A549 (cell line): ENCODE measurements at regions of chr1 and their contacts with region 1.

Region 1: DNA sequence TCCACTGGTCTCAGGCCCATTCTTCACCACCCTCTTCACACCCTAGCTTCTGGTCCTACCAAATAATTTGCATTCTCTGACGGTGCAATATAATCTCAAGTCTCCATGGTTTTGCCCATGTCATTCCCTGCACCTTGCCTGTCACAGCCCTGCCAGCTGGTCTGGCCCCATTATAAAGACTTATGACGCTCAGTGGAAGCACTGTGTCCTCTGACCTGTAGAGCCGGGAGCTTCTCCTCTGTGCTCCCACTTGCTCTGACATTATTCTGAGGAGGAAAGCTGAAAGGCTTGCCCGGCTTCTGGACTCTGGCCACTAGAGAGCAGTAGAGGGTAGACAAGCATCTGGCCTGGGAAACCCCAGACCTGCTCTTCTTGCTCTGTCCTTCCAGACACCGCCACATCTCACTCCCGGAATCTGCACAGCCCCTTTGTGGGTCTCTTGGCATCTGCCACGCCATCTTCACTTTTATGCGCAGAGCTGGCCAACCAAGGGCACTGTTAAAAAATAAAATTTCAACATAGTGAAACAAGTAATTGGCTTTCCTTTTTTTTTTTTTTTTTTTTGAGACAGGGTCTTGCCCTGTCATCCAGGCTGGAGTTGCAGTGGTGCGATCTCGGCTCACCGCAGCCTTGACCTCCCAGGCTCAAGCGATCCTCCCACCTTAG is 44.4 kb downstream of the NENF start:
- DNase-seq: peak; percentile 81 to 90
- ATAC-seq: peak; percentile 93 to 95
- H3K4me3 ChIP-seq: no peak overlapping the region
- H3K27ac ChIP-seq: peak overlapping the region; percentile 33 to 72; a peak in 5 of 6 replicates
- H3K4me1 ChIP-seq: peaks cover 21% of the 10 kb centered on the region
- CTCF ChIP-seq: peak; percentile 87
- EP300 ChIP-seq: no peak
- POLR2A ChIP-seq: no peak
- RAD21 ChIP-seq: peak; percentile 95

Region 2: GRCh38 chr1:212498283-212499040 is 21.3 kb after region 1 on chr1:
- CTCF ChIA-PET with region 1: interaction called, 18 read pairs
- POLR2A ChIA-PET with region 1: no interaction called
- DNase-seq: peak in 1 of 2 experiments; percentile 35
- ATAC-seq: peak in 1 of 2 experiments; percentile 32; a peak in 2 of 6 replicates
- H3K4me3 ChIP-seq: no peak overlapping the region
- H3K27ac ChIP-seq: peak overlapping the region in 1 of 2 experiments; percentile 33; a peak in 2 of 6 replicates
- H3K4me1 ChIP-seq: peaks cover 8% of the 10 kb centered on the region; the same call in 1 of the 3 replicates
- CTCF ChIP-seq: no peak
- EP300 ChIP-seq: no peak
- POLR2A ChIP-seq: no peak
- RAD21 ChIP-seq: no peak

Region 3: GRCh38 chr1:212529211-212529741 is 52.1 kb after region 1 on chr1:
- CTCF ChIA-PET with region 1: interaction called, 12 read pairs
- POLR2A ChIA-PET with region 1: no interaction called
- DNase-seq: no peak
- ATAC-seq: no peak
- H3K4me3 ChIP-seq: no peak overlapping the region
- H3K27ac ChIP-seq: no peak overlapping the region
- H3K4me1 ChIP-seq: no peaks in the 10 kb centered on the region
- CTCF ChIP-seq: no peak
- EP300 ChIP-seq: no peak
- POLR2A ChIP-seq: no peak
- RAD21 ChIP-seq: no peak

Region 4: GRCh38 chr1:212566522-212567479 is 89.7 kb after region 1 on chr1:
- CTCF ChIA-PET with region 1: interaction called, 18 read pairs
- POLR2A ChIA-PET with region 1: no interaction called
- DNase-seq: peak; percentile 66 to 72
- ATAC-seq: peak; percentile 80 to 89
- H3K4me3 ChIP-seq: peak overlapping the region; percentile 52
- H3K27ac ChIP-seq: peak overlapping the region; percentile 78 to 84
- H3K4me1 ChIP-seq: peaks cover 15% of the 10 kb centered on the region
- CTCF ChIP-seq: no peak
- EP300 ChIP-seq: no peak
- POLR2A ChIP-seq: no peak
- RAD21 ChIP-seq: no peak

Region 5: DNA sequence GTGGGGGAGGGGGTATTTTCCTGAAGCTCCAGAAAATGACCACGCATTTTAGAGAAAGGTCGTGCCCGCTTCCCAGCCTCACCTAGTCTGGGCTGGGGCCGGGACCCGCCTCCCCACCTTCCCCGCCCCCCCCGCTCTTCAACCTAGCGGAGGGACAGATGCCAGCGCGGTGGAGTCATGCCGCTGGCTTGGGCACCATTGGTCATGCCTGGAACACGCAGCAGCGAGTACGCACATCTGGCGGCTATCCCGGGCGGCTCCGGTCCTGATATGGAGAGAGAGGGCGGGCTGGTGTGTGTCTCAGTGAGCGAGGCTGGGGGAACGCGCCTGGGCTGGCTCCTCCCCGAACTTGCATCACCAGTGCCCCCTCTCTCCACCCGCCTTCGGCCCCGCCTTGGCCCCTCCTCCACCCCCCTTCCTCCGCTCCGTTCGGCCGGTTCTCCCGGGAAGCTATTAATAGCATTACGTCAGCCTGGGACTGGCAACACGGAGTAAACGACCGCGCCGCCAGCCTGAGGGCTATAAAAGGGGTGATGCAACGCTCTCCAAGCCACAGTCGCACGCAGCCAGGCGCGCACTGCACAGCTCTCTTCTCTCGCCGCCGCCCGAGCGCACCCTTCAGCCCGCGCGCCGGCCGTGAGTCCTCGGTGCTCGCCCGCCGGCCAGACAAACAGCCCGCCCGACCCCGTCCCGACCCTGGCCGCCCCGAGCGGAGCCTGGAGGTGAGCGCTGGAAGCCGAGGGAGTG is 131.2 kb after region 1 on chr1 and contains the start of gene ATF3:
- CTCF ChIA-PET with region 1: interaction called, 47 read pairs
- POLR2A ChIA-PET with region 1: interaction called, 72 read pairs
- DNase-seq: peak; percentile 94 to 98
- ATAC-seq: peak; percentile 82 to 84
- H3K4me3 ChIP-seq: peak within 1 kb of the TSS; percentile 90
- H3K27ac ChIP-seq: peak within 1 kb of the TSS; percentile 88 to 93
- H3K4me1 ChIP-seq: peaks cover 23% of the 10 kb centered on the region; the same call in 2 of the 3 replicates
- CTCF ChIP-seq: no peak
- EP300 ChIP-seq: peak in 1 of 2 experiments; percentile 65; a peak in 2 of 5 replicates
- POLR2A ChIP-seq: peak; percentile 99
- RAD21 ChIP-seq: no peak; a peak in 2 of 5 replicates
- polyA plus RNA-seq, gene ATF3: 33.4 and 62.9 TPM in 2 replicates

Region 6: DNA sequence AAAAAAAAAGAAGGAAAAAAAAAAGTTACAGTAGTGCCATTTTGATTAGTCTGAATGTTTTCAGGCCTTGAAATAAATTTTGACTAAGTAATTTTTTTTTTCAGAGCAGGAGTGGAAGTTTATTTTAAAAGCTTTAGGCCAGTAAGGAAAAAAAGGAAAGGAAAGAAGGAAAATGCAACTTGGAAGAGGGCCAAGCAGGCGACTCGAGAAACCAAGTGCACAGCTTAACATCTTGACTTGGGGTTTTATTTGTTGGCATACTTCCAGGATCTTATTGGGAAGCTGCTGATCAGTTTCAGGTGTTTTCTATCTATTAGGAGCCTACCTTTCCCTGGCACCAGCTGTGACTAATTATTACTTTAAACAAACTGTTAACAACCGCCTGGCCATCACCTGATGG is 173.1 kb after region 1 on chr1:
- CTCF ChIA-PET with region 1: interaction called, 10 read pairs
- POLR2A ChIA-PET with region 1: no interaction called
- DNase-seq: no peak
- ATAC-seq: no peak
- H3K4me3 ChIP-seq: no peak overlapping the region
- H3K27ac ChIP-seq: no peak overlapping the region
- H3K4me1 ChIP-seq: no peaks in the 10 kb centered on the region
- CTCF ChIP-seq: no peak
- EP300 ChIP-seq: no peak
- POLR2A ChIP-seq: no peak
- RAD21 ChIP-seq: no peak